CD8-positive, alpha-beta T cell (primary cell): ENCODE measurements at regions of chr2 and their contacts with region 1.

Region 1: DNA sequence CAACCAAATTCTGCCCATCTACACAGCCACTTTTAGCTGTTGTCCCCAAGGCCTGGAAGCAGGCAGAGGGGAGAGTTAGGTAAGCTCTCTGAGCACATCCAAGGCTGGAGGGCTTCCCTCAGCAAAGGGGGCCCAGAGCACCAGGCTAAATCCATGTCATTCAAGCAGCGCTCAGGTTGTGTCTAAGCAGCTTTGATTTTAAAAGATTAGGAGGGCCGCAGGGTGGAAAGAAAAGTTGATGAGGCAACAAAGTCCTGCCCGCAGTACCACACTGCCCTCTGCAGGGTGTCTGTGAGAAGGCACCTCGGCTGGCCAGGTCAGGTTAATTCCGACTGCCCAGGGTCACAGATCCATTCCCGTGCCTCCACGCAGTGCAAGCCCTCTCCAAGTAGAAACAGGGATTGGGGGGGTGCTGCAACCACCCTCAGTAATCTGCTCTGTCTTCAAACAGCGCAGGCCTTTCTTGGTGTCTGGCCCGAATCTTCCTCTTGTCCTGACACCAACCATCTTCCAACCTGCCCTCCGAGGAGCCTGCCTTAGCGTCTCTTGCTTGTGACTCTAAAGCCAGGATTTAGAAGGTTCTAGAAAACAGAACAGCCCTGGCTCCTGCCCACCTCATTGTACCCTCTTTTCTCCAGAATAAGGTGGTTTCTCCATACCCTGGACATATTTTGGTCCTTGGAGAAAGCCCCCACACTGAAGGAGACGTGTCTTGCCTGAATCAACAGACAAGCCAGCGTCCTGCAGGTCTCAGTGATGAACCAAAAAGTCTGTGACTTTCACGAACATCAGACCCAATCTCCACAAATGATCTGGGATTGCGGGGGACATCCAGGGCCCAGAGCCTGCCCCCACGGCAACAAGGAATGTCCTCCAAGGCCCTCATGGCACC is 289.2 kb downstream of the TNS1 start:
- DNase-seq: peak; percentile 26 to 83 (median 63)
- ATAC-seq: peak; percentile 82
- H3K4me3 ChIP-seq: no peak overlapping the region
- H3K4me3 Mint-ChIP-seq: no peak overlapping the region
- H3K27ac ChIP-seq: no peak overlapping the region
- H3K27ac Mint-ChIP-seq: no peak overlapping the region
- H3K4me1 ChIP-seq: peaks cover 3% of the 10 kb centered on the region
- H3K4me1 Mint-ChIP-seq: peaks cover 8% of the 10 kb centered on the region
- H3K27me3 ChIP-seq: no peaks in the 10 kb centered on the region
- H3K27me3 Mint-ChIP-seq: no peaks in the 10 kb centered on the region
- CTCF ChIP-seq: peak; percentile 92

Region 2: GRCh38 chr2:216519154-216519762 is 1194.4 kb before region 1 on chr2:
- CTCF ChIA-PET with region 1: interaction called, 4 read pairs
- POLR2A ChIA-PET with region 1: no interaction called
- intact Hi-C with region 1: loop called (anchors 2 kb)
- DNase-seq: peak in 8 of 9 experiments; percentile 20 to 77 (median 48)
- ATAC-seq: peak; percentile 51
- H3K4me3 ChIP-seq: no peak overlapping the region
- H3K4me3 Mint-ChIP-seq: no peak overlapping the region
- H3K27ac ChIP-seq: no peak overlapping the region
- H3K27ac Mint-ChIP-seq: no peak overlapping the region
- H3K4me1 ChIP-seq: no peaks in the 10 kb centered on the region
- H3K4me1 Mint-ChIP-seq: no peaks in the 10 kb centered on the region
- H3K27me3 ChIP-seq: no peaks in the 10 kb centered on the region
- H3K27me3 Mint-ChIP-seq: no peaks in the 10 kb centered on the region
- CTCF ChIP-seq: peak; percentile 72

Region 3: GRCh38 chr2:216681683-216682082 is 1032.0 kb before region 1 on chr2:
- CTCF ChIA-PET with region 1: interaction called, 110 read pairs
- POLR2A ChIA-PET with region 1: interaction called, 3 read pairs
- intact Hi-C with region 1: loop called (anchors 1 kb)
- DNase-seq: no peak
- ATAC-seq: no peak
- H3K4me3 ChIP-seq: no peak overlapping the region
- H3K4me3 Mint-ChIP-seq: no peak overlapping the region
- H3K27ac ChIP-seq: no peak overlapping the region
- H3K27ac Mint-ChIP-seq: no peak overlapping the region
- H3K4me1 ChIP-seq: no peaks in the 10 kb centered on the region
- H3K4me1 Mint-ChIP-seq: peaks cover 3% of the 10 kb centered on the region
- H3K27me3 ChIP-seq: peaks cover 0 to 8% of the 10 kb centered on the region in 2 experiments
- H3K27me3 Mint-ChIP-seq: peaks cover 26% of the 10 kb centered on the region
- CTCF ChIP-seq: no peak

Region 4: DNA sequence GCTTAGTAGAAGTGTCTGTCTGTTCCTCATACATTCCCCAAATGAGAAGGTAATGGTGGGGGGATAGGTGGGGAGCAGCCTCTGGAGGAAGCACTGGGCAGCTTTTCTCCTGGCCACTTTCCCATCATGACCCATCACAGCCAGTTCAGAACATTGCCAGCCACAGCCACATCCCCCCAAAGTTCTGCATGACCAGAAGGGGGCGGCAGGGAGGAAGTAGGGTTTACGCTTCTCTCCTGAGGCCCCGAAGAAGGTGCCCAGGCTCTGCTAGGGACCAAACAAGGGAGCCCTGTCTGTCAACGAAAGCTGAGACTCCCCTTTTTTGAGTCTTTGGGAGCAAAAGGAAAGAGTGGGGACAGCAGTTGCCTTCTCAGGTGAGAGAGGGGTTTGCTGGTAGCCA is 1026.0 kb before region 1 on chr2:
- CTCF ChIA-PET with region 1: interaction called, 110 read pairs
- POLR2A ChIA-PET with region 1: interaction called, 3 read pairs
- intact Hi-C with region 1: loop called (anchors 1 kb)
- DNase-seq: peak in 5 of 9 experiments; percentile 18 to 48 (median 32)
- ATAC-seq: no peak
- H3K4me3 ChIP-seq: no peak overlapping the region
- H3K4me3 Mint-ChIP-seq: no peak overlapping the region
- H3K27ac ChIP-seq: no peak overlapping the region
- H3K27ac Mint-ChIP-seq: no peak overlapping the region
- H3K4me1 ChIP-seq: peaks cover 14% of the 10 kb centered on the region
- H3K4me1 Mint-ChIP-seq: peaks cover 15% of the 10 kb centered on the region
- H3K27me3 ChIP-seq: peaks cover 4 to 10% of the 10 kb centered on the region in 2 experiments
- H3K27me3 Mint-ChIP-seq: peaks cover 57% of the 10 kb centered on the region
- CTCF ChIP-seq: peak; percentile 30

Region 5: GRCh38 chr2:216698895-216699294 is 1014.7 kb before region 1 on chr2:
- CTCF ChIA-PET with region 1: interaction called, 12 read pairs
- POLR2A ChIA-PET with region 1: no interaction called
- intact Hi-C with region 1: loop called in 1 of 2 experiments (anchors 1 kb)
- DNase-seq: peak in 2 of 9 experiments; percentile 33 to 55
- ATAC-seq: peak; percentile 53
- H3K4me3 ChIP-seq: no peak overlapping the region
- H3K4me3 Mint-ChIP-seq: no peak overlapping the region
- H3K27ac ChIP-seq: no peak overlapping the region
- H3K27ac Mint-ChIP-seq: no peak overlapping the region
- H3K4me1 ChIP-seq: peaks cover 14% of the 10 kb centered on the region
- H3K4me1 Mint-ChIP-seq: peaks cover 9% of the 10 kb centered on the region
- H3K27me3 ChIP-seq: peaks cover 6 to 17% of the 10 kb centered on the region in 2 experiments
- H3K27me3 Mint-ChIP-seq: peaks cover 32% of the 10 kb centered on the region
- CTCF ChIP-seq: peak; percentile 22

Region 6: DNA sequence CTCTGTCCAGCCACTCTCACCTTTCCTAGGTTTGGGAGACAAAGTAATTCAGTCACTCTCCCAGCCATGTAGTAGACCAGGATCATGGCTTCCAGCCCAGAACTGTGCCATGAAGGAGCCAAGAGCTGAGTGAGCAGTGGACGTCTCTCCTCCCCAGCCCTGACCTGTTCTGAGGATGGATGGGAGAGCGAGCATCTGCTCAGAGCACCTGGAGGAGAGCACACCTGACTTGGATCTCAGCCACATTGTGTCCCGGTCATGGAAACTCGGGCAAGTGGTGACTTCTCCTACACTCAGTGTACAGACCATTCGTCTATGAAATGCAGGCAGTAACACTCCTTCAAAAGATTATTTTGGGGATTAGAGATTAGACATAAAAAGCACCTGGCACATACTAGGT is 10.5 kb before region 1 on chr2:
- CTCF ChIA-PET with region 1: interaction called, 12 read pairs
- POLR2A ChIA-PET with region 1: no interaction called
- intact Hi-C with region 1: no loop called
- DNase-seq: no peak
- ATAC-seq: no peak
- H3K4me3 ChIP-seq: no peak overlapping the region
- H3K4me3 Mint-ChIP-seq: no peak overlapping the region
- H3K27ac ChIP-seq: no peak overlapping the region
- H3K27ac Mint-ChIP-seq: no peak overlapping the region
- H3K4me1 ChIP-seq: no peaks in the 10 kb centered on the region
- H3K4me1 Mint-ChIP-seq: no peaks in the 10 kb centered on the region
- H3K27me3 ChIP-seq: no peaks in the 10 kb centered on the region
- H3K27me3 Mint-ChIP-seq: no peaks in the 10 kb centered on the region
- CTCF ChIP-seq: no peak

Region 7: GRCh38 chr2:217851191-217852020 is 137.8 kb after region 1 on chr2:
- CTCF ChIA-PET with region 1: no interaction called
- POLR2A ChIA-PET with region 1: no interaction called
- intact Hi-C with region 1: no loop called
- DNase-seq: no peak
- ATAC-seq: no peak
- H3K4me3 ChIP-seq: no peak overlapping the region
- H3K4me3 Mint-ChIP-seq: no peak overlapping the region
- H3K27ac ChIP-seq: no peak overlapping the region
- H3K27ac Mint-ChIP-seq: no peak overlapping the region
- H3K4me1 ChIP-seq: no peaks in the 10 kb centered on the region
- H3K4me1 Mint-ChIP-seq: no peaks in the 10 kb centered on the region
- H3K27me3 ChIP-seq: no peaks in the 10 kb centered on the region
- H3K27me3 Mint-ChIP-seq: peaks cover 6% of the 10 kb centered on the region
- CTCF ChIP-seq: no peak

Region 8: GRCh38 chr2:217886720-217887309 is 173.2 kb after region 1 on chr2:
- CTCF ChIA-PET with region 1: no interaction called
- POLR2A ChIA-PET with region 1: no interaction called
- intact Hi-C with region 1: no loop called
- DNase-seq: peak; percentile 20 to 74 (median 61)
- ATAC-seq: peak; percentile 42
- H3K4me3 ChIP-seq: no peak overlapping the region
- H3K4me3 Mint-ChIP-seq: no peak overlapping the region
- H3K27ac ChIP-seq: no peak overlapping the region
- H3K27ac Mint-ChIP-seq: no peak overlapping the region
- H3K4me1 ChIP-seq: no peaks in the 10 kb centered on the region
- H3K4me1 Mint-ChIP-seq: peaks cover 4% of the 10 kb centered on the region
- H3K27me3 ChIP-seq: no peaks in the 10 kb centered on the region
- H3K27me3 Mint-ChIP-seq: peaks cover 3% of the 10 kb centered on the region
- CTCF ChIP-seq: peak; percentile 62

Region 9: GRCh38 chr2:217943446-217944389 is 230.1 kb after region 1 on chr2:
- CTCF ChIA-PET with region 1: no interaction called
- POLR2A ChIA-PET with region 1: no interaction called
- intact Hi-C with region 1: no loop called
- DNase-seq: no peak
- ATAC-seq: no peak
- H3K4me3 ChIP-seq: no peak overlapping the region
- H3K4me3 Mint-ChIP-seq: no peak overlapping the region
- H3K27ac ChIP-seq: no peak overlapping the region
- H3K27ac Mint-ChIP-seq: no peak overlapping the region
- H3K4me1 ChIP-seq: no peaks in the 10 kb centered on the region
- H3K4me1 Mint-ChIP-seq: peaks cover 5% of the 10 kb centered on the region
- H3K27me3 ChIP-seq: no peaks in the 10 kb centered on the region
- H3K27me3 Mint-ChIP-seq: peaks cover 24% of the 10 kb centered on the region
- CTCF ChIP-seq: no peak